CD4-positive, alpha-beta T cell (primary cell): ENCODE measurements at regions of chr2 and their contacts with region 1.

Region 1: GRCh38 chr2:37966326-37966725 is 41.2 kb downstream of the RMDN2 start:
- DNase-seq: no peak
- ATAC-seq: no peak
- H3K4me3 ChIP-seq: no peak overlapping the region
- H3K4me3 Mint-ChIP-seq: no peak overlapping the region
- H3K27ac ChIP-seq: no peak overlapping the region
- H3K27ac Mint-ChIP-seq: no peak overlapping the region
- H3K4me1 ChIP-seq: no peaks in the 10 kb centered on the region
- H3K4me1 Mint-ChIP-seq: no peaks in the 10 kb centered on the region
- H3K27me3 ChIP-seq: no peaks in the 10 kb centered on the region
- H3K27me3 Mint-ChIP-seq: no peaks in the 10 kb centered on the region
- CTCF ChIP-seq: no peak

Region 2: GRCh38 chr2:38806015-38806732 is 839.8 kb after region 1 on chr2:
- CTCF ChIA-PET with region 1: no interaction called
- POLR2A ChIA-PET with region 1: no interaction called
- intact Hi-C with region 1: loop called in 1 of 2 experiments (anchors 10 kb)
- DNase-seq: peak in 1 of 14 experiments; percentile 1
- ATAC-seq: no peak
- H3K4me3 ChIP-seq: no peak overlapping the region
- H3K4me3 Mint-ChIP-seq: no peak overlapping the region
- H3K27ac ChIP-seq: no peak overlapping the region
- H3K27ac Mint-ChIP-seq: no peak overlapping the region
- H3K4me1 ChIP-seq: no peaks in the 10 kb centered on the region
- H3K4me1 Mint-ChIP-seq: no peaks in the 10 kb centered on the region
- H3K27me3 ChIP-seq: no peaks in the 10 kb centered on the region
- H3K27me3 Mint-ChIP-seq: no peaks in the 10 kb centered on the region
- CTCF ChIP-seq: no peak